Motor neuron (in vitro differentiated cells): ENCODE measurements at regions of chr13 and their contacts with region 1.

Region 1: GRCh38 chr13:36420437-36420891 is 11.8 kb upstream of the CCNA1 start:
- ATAC-seq: peak; percentile 82 to 100 (median 93)
- H3K4me3 ChIP-seq: no peak overlapping the region
- H3K27ac ChIP-seq: no peak overlapping the region
- H3K4me1 ChIP-seq: no peaks in the 10 kb centered on the region

Region 2: GRCh38 chr13:36549755-36550154 is 129.3 kb after region 1 on chr13:
- in situ Hi-C with region 1: no loop called
- ATAC-seq: peak in 5 of 8 experiments; percentile 82 to 98 (median 94)
- H3K4me3 ChIP-seq: no peak overlapping the region
- H3K27ac ChIP-seq: peak overlapping the region in 1 of 2 donors; percentile 16
- H3K4me1 ChIP-seq: peaks cover 8 to 17% of the 10 kb centered on the region in 2 donors

Region 3: GRCh38 chr13:36848199-36848982 is 427.9 kb after region 1 on chr13:
- in situ Hi-C with region 1: loop called in 1 of 9 experiments (anchors 25 kb)
- ATAC-seq: peak in 2 of 8 experiments; percentile 66 to 74
- H3K4me3 ChIP-seq: no peak overlapping the region
- H3K27ac ChIP-seq: no peak overlapping the region
- H3K4me1 ChIP-seq: no peaks in the 10 kb centered on the region